Heart right ventricle (tissue), 16 donors: ENCODE measurements at regions of chr7 and their contacts with region 1.

Region 1: DNA sequence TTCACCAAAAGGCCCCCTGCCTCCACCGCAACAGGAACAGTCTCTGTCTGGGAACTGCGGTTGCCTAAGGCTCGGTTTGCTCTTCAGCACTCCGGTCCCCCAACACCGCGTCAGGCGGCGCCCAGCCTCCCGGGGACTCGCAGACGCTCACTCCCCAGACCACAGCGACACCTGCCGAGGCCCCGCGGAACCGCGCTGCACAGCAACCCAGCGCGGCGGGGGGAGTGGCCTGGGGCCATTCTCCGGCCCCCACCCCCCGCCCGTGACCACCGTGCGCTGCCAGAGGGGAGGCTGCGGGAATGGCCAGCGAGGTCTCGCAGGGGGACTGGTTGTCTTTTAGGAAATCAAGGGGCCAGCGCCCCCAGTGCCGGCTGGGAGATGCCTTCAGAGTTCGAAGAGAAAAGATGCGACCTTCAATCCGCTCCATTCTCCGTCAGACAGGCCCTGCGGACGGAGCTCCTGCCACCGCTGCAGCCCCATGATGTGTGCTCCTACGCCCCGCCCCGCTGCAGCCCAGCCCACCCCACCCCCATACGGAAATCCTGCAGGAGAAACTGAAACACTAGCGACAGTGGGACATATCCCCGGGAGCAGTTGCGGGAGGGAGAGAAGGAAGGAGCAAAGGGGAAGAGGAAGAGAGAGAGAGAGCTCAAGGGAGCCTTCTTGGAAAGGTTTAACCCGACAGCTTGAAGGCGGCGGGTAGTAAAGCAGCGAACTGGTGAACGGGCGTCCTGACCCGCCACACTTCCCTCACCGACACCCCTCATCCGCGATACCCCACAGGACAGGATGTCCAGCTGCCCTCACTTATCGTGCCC is 137.4 kb upstream of the CDCA7L start:
- DNase-seq: peak; percentile 90 to 92
- ATAC-seq: peak; percentile 96 to 99 (median 98)
- H3K4me3 ChIP-seq: peak overlapping the region; percentile 32 to 73 (median 65)
- H3K27ac ChIP-seq: peak overlapping the region; percentile 46 to 91 (median 80)
- H3K4me1 ChIP-seq: peaks cover 0 to 16% (median 7%) of the 10 kb centered on the region in 9 donors
- H3K27me3 ChIP-seq: peaks cover 0 to 35% (median 14%) of the 10 kb centered on the region in 7 donors
- CTCF ChIP-seq: peak; percentile 88 to 99 (median 97)

Region 2: GRCh38 chr7:21261627-21262594 is 821.2 kb before region 1 on chr7:
- intact Hi-C with region 1: loop called in 1 of 10 experiments (anchors 5 kb)
- DNase-seq: peak in 1 of 2 donors; percentile 6
- ATAC-seq: no peak
- H3K4me3 ChIP-seq: no peak overlapping the region
- H3K27ac ChIP-seq: no peak overlapping the region
- H3K4me1 ChIP-seq: no peaks in the 10 kb centered on the region
- H3K27me3 ChIP-seq: peaks cover 0 to 37% (median 5%) of the 10 kb centered on the region in 7 donors
- CTCF ChIP-seq: peak in 8 of 9 donors; percentile 8 to 49 (median 40)